ENCODE measurements at regions of chr11 and their contacts with region 1.

Region 1: GRCh38 chr11:75802913-75803820 is 11.8 kb upstream of the UVRAG start:
- DNase-seq: peak; percentile 50
- ATAC-seq: peak; percentile 95
- H3K4me3 Mint-ChIP-seq: no peak overlapping the region
- H3K27ac Mint-ChIP-seq: no peak overlapping the region
- H3K4me1 Mint-ChIP-seq: peaks cover 15% of the 10 kb centered on the region
- H3K27me3 Mint-ChIP-seq: no peaks in the 10 kb centered on the region
- CTCF ChIP-seq: peak; percentile 17

Region 2: GRCh38 chr11:75673977-75674582 is 129.1 kb before region 1 on chr11:
- CTCF ChIA-PET with region 1: no interaction called
- POLR2A ChIA-PET with region 1: no interaction called
- intact Hi-C with region 1: no loop called
- DNase-seq: no peak
- ATAC-seq: peak; percentile 68
- H3K4me3 Mint-ChIP-seq: no peak overlapping the region
- H3K27ac Mint-ChIP-seq: no peak overlapping the region
- H3K4me1 Mint-ChIP-seq: peaks cover 2% of the 10 kb centered on the region
- H3K27me3 Mint-ChIP-seq: peaks cover 18% of the 10 kb centered on the region
- CTCF ChIP-seq: no peak

Region 3: DNA sequence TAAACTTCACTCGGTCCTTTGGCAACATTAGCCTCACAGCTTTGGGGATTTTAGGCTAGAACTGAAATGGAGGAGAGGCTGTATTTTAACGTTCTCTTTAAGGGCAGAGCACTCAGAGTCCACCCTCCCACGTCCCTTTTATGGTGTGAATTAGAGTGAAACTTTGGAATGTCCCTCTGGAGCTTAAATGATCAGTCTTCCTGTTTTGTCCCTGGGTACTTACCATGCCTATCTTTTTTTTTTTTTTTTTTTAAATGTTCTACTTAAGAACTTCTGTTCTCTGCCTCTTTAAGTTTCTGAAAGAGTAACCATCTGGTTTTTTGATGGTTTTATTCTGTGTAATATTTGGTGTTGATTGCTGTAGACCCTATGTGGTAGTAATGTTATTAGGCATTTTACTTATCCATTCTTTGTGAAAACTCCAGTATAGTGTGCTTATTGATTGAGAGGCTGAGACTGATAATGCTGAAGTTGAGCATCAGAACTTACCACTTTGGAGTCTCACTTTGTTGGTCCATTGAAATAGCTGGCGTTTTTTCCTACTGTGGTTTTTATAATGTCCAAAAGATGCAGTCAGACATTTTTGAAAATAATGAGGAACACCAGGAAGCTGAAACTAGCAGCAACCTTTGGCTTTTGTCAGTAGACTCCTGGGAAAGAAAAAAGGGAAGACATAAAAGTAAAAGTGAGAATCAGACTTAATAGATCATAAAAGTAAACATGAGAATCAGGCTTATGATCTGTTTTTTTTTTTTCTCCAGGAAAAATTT is 23.5 kb after region 1 on chr11:
- CTCF ChIA-PET with region 1: interaction called, 6 read pairs
- POLR2A ChIA-PET with region 1: interaction called, 9 read pairs
- intact Hi-C with region 1: loop called (anchors 2 kb)
- DNase-seq: no peak
- ATAC-seq: no peak
- H3K4me3 Mint-ChIP-seq: peak overlapping the region; percentile 63
- H3K27ac Mint-ChIP-seq: peak overlapping the region; percentile 76
- H3K4me1 Mint-ChIP-seq: peaks cover 87% of the 10 kb centered on the region
- H3K27me3 Mint-ChIP-seq: no peaks in the 10 kb centered on the region
- CTCF ChIP-seq: no peak

Region 4: DNA sequence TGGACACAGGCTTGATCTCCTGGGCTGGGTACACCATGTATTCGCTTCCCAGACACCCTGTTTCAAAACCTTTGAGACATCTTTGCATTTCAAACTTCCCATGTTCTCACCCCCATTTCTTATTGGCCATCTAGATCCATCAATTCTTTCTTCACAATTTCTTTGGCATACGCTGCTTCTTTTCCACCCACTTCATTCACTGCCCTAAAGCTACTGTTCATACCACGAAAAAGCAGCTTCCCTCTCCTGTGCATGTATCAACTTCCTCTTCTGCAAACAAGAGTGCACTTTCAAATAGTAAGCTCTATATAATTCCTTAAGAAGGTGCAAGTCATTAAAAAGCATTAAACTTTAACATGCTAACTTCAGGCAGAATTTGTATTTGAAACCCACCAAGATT is 33.2 kb after region 1 on chr11:
- CTCF ChIA-PET with region 1: interaction called, 4 read pairs
- POLR2A ChIA-PET with region 1: interaction called, 7 read pairs
- intact Hi-C with region 1: loop called (anchors 5 kb)
- DNase-seq: no peak
- ATAC-seq: peak; percentile 71
- H3K4me3 Mint-ChIP-seq: peak overlapping the region; percentile 5
- H3K27ac Mint-ChIP-seq: peak overlapping the region; percentile 38
- H3K4me1 Mint-ChIP-seq: peaks cover 95% of the 10 kb centered on the region
- H3K27me3 Mint-ChIP-seq: no peaks in the 10 kb centered on the region
- CTCF ChIP-seq: no peak

Region 5: GRCh38 chr11:76041210-76041609 is 238.0 kb after region 1 on chr11:
- CTCF ChIA-PET with region 1: no interaction called
- POLR2A ChIA-PET with region 1: no interaction called
- intact Hi-C with region 1: no loop called
- DNase-seq: no peak
- ATAC-seq: no peak
- H3K4me3 Mint-ChIP-seq: no peak overlapping the region
- H3K27ac Mint-ChIP-seq: no peak overlapping the region
- H3K4me1 Mint-ChIP-seq: no peaks in the 10 kb centered on the region
- H3K27me3 Mint-ChIP-seq: no peaks in the 10 kb centered on the region
- CTCF ChIP-seq: no peak

Region 6: DNA sequence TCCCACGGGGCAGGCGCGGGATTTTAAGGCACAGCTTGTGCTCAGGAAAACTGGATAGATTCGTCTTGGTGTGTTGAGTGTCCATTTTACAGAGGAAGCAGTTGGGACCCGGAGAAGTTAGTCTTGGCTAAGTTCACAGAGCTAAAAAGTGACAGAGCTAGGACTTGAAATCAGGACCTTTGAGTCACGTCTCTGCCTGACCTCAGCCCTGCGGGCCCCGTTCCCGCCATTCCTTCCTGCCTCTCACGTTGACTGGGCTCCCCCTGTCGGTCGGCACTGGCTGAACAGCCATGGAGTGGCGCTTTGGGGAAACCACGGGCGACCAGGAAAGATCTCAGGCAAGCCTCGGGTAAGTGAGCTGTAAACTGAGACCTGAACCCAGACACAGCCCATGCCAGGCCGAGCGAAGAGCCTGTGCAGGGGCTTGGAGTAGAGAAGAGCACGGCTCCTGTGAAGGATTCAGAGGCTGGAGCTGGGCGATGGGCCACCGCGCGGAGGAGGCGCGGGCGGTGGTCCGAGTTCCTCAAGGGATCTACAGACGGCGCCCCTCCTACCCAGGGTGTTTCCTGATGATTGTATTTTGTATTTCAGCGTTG is 349.0 kb after region 1 on chr11:
- CTCF ChIA-PET with region 1: interaction called, 20 read pairs
- POLR2A ChIA-PET with region 1: no interaction called
- intact Hi-C with region 1: loop called (anchors 1 kb)
- DNase-seq: peak; percentile 68
- ATAC-seq: peak; percentile 88
- H3K4me3 Mint-ChIP-seq: peak overlapping the region; percentile 80
- H3K27ac Mint-ChIP-seq: peak overlapping the region; percentile 41
- H3K4me1 Mint-ChIP-seq: peaks cover 22% of the 10 kb centered on the region
- H3K27me3 Mint-ChIP-seq: no peaks in the 10 kb centered on the region
- CTCF ChIP-seq: no peak

Region 7: GRCh38 chr11:76318744-76319384 is 515.7 kb after region 1 on chr11:
- CTCF ChIA-PET with region 1: interaction called, 3 read pairs
- POLR2A ChIA-PET with region 1: no interaction called
- intact Hi-C with region 1: loop called (anchors 1 kb)
- DNase-seq: peak; percentile 73
- ATAC-seq: peak; percentile 97
- H3K4me3 Mint-ChIP-seq: no peak overlapping the region
- H3K27ac Mint-ChIP-seq: no peak overlapping the region
- H3K4me1 Mint-ChIP-seq: peaks cover 2% of the 10 kb centered on the region
- H3K27me3 Mint-ChIP-seq: peaks cover 40% of the 10 kb centered on the region
- CTCF ChIP-seq: no peak

Measured in activated B cell treated with CpG ODN at 0.5 μM for 24 hours (primary cell).